ENCODE measurements at regions of chr22 and their contacts with region 1.

Region 1: GRCh38 chr22:36065775-36066559 is 37.3 kb upstream of the RBFOX2 start:
- DNase-seq: peak; percentile 92
- ATAC-seq: peak; percentile 94
- H3K4me3 ChIP-seq: peak overlapping the region; percentile 52
- H3K27ac ChIP-seq: peak overlapping the region; percentile 64
- H3K4me1 ChIP-seq: peaks cover 5% of the 10 kb centered on the region
- H3K27me3 ChIP-seq: no peaks in the 10 kb centered on the region
- CTCF ChIP-seq: peak; percentile 81
- POLR2A ChIP-seq: no peak
- RAD21 ChIP-seq: peak; percentile 70

Region 2: DNA sequence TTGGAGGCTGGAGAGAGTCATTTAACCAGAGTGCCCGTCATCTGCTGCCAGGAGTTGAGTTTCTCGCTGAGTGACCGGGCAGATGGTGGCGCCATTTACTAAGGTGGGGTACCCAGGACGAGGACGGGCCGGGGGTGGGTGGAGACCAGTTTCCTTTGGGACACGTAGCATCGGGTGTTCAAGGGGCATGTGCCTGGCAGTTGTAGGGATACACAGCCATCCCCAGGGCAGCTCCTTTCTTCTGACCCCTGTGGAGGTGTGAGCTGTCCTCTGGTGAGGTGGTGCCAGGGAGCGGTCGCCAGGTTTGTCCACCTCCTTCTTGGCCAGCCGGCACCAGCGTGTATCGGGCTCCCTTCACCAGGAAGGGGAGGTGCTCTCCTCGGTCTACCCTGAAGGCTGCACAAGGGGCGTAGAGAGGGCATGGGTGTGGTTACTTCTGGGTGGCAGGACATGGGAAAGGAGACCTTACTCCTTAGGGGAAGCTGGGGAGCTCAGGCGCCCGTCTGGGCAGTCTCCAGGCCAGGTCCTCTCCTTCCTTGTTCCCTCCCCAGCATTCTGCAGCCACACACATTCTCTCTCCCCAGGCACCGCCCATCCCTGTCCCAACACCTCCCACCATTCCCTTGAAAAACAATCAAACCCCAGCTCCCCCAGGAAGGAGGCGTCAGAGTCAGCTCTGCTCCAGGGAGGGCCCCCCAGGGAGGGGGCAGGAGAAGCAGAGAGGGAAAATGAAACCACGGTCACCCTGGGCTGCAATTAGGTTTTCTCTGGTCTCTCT is 438.5 kb before region 1 on chr22:
- CTCF ChIA-PET with region 1: interaction called, 8 read pairs
- POLR2A ChIA-PET with region 1: no interaction called
- dilution Hi-C with region 1: no loop called
- in situ Hi-C with region 1: no loop called
- intact Hi-C with region 1: loop called (anchors 1 kb)
- DNase-seq: peak; percentile 90
- ATAC-seq: peak; percentile 77
- H3K4me3 ChIP-seq: peak overlapping the region; percentile 50
- H3K27ac ChIP-seq: peak overlapping the region; percentile 82
- H3K4me1 ChIP-seq: peaks cover 9% of the 10 kb centered on the region
- H3K27me3 ChIP-seq: no peaks in the 10 kb centered on the region
- CTCF ChIP-seq: peak; percentile 81
- POLR2A ChIP-seq: no peak
- RAD21 ChIP-seq: peak; percentile 88

Region 3: GRCh38 chr22:35863432-35863831 is 202.5 kb before region 1 on chr22:
- CTCF ChIA-PET with region 1: no interaction called
- POLR2A ChIA-PET with region 1: no interaction called
- dilution Hi-C with region 1: no loop called
- in situ Hi-C with region 1: no loop called
- intact Hi-C with region 1: no loop called
- DNase-seq: no peak
- ATAC-seq: no peak
- H3K4me3 ChIP-seq: no peak overlapping the region
- H3K27ac ChIP-seq: no peak overlapping the region
- H3K4me1 ChIP-seq: peaks cover 4% of the 10 kb centered on the region
- H3K27me3 ChIP-seq: no peaks in the 10 kb centered on the region
- CTCF ChIP-seq: no peak
- POLR2A ChIP-seq: no peak
- RAD21 ChIP-seq: no peak

Region 4: GRCh38 chr22:35995772-35996171 is 70.2 kb before region 1 on chr22:
- CTCF ChIA-PET with region 1: interaction called, 11 read pairs
- POLR2A ChIA-PET with region 1: no interaction called
- dilution Hi-C with region 1: no loop called
- in situ Hi-C with region 1: no loop called
- intact Hi-C with region 1: no loop called
- DNase-seq: peak; percentile 99
- ATAC-seq: peak; percentile 77
- H3K4me3 ChIP-seq: peak overlapping the region; percentile 2; the same call in 1 of the 2 replicates
- H3K27ac ChIP-seq: peak overlapping the region; percentile 93
- H3K4me1 ChIP-seq: peaks cover 23% of the 10 kb centered on the region
- H3K27me3 ChIP-seq: no peaks in the 10 kb centered on the region
- CTCF ChIP-seq: no peak
- POLR2A ChIP-seq: no peak
- RAD21 ChIP-seq: peak; percentile 31

Region 5: DNA sequence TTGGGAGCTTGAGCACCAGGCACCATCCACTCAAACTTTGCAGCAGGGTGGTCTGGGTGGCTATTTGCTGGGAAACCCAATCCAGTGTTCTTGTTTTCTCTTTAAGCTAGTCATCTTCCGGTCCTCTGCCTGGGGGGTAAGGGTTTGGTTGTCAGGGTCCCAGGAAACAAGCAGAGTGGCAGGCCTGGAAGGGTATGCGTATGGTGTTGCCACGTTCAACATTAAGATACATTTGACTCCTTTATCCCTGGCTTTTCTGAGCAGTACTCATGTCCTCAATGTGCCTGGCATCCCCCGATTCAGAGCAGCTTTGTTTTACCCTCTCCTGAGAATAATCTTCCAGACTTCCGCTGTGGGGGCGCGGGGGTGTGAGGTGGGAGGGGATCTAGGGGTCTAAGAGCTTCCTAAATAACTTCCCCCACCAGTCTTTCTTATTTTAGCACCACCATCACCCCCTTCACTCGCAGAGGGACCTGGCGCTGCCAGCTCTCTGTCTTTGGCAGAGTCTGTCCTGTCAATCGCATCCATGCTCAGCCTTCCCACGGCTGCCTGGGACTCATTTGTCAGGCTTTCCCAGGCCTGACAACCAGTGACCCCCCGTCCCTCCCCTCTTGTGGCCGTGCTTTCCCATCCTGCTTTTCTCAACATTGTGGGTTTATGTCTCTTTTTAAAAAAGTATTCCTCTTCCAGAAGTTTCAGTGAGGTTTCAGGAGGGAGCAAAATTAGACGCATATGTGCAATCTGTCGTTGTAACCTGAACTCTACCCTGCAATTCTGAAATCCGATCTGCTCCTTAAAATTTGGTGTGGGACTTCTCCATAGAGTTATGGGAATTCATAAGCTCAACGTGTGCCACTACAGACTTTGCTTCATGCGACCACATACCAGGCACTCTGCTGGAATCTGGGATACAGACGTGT is 10.3 kb before region 1 on chr22:
- CTCF ChIA-PET with region 1: interaction called, 16 read pairs
- POLR2A ChIA-PET with region 1: interaction called, 4 read pairs
- dilution Hi-C with region 1: no loop called
- in situ Hi-C with region 1: no loop called
- intact Hi-C with region 1: no loop called
- DNase-seq: peak; percentile 42
- ATAC-seq: peak; percentile 46
- H3K4me3 ChIP-seq: no peak overlapping the region
- H3K27ac ChIP-seq: peak overlapping the region; percentile 16; the same call in 1 of the 2 replicates
- H3K4me1 ChIP-seq: peaks cover 11% of the 10 kb centered on the region
- H3K27me3 ChIP-seq: no peaks in the 10 kb centered on the region
- CTCF ChIP-seq: no peak
- POLR2A ChIP-seq: no peak
- RAD21 ChIP-seq: no peak

Region 6: GRCh38 chr22:36117053-36117554 is 51.1 kb after region 1 on chr22:
- CTCF ChIA-PET with region 1: interaction called, 11 read pairs
- POLR2A ChIA-PET with region 1: no interaction called
- dilution Hi-C with region 1: no loop called
- in situ Hi-C with region 1: no loop called
- intact Hi-C with region 1: no loop called
- DNase-seq: no peak
- ATAC-seq: no peak
- H3K4me3 ChIP-seq: no peak overlapping the region
- H3K27ac ChIP-seq: no peak overlapping the region
- H3K4me1 ChIP-seq: no peaks in the 10 kb centered on the region
- H3K27me3 ChIP-seq: no peaks in the 10 kb centered on the region; the same call in none of the 2 replicates
- CTCF ChIP-seq: no peak
- POLR2A ChIP-seq: no peak
- RAD21 ChIP-seq: no peak